Naive thymus-derived CD4-positive, alpha-beta T cell (primary cell): ENCODE measurements at regions of chr3 and their contacts with region 1.

Region 1: DNA sequence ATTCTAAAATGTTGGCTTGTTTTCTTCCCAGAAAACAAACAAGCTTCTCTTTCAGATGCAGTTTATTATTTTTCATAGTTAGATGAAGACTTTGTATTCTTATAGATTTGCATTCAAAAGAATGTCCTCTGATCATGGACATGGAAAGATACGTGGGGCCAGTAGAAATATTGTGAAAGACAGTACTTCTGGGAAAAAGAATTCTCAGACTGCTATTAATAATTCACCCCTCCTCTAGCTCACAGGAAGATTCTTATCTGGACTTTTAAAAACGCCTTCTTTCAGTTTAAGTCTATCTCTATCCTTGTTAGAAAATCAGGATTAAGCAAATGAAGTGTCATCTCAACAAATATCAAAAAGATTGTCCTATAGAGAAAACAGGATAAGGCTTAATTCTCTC is 514.1 kb upstream of the ADAMTS9 start:
- DNase-seq: no peak
- ATAC-seq: no peak
- H3K4me3 ChIP-seq: no peak overlapping the region
- H3K4me3 Mint-ChIP-seq: no peak overlapping the region
- H3K27ac ChIP-seq: no peak overlapping the region
- H3K27ac Mint-ChIP-seq: no peak overlapping the region
- H3K4me1 ChIP-seq: no peaks in the 10 kb centered on the region
- H3K4me1 Mint-ChIP-seq: no peaks in the 10 kb centered on the region
- H3K27me3 ChIP-seq: no peaks in the 10 kb centered on the region
- H3K27me3 Mint-ChIP-seq: peaks cover 0 to 4% (median 0%) of the 10 kb centered on the region in 5 donors

Region 2: DNA sequence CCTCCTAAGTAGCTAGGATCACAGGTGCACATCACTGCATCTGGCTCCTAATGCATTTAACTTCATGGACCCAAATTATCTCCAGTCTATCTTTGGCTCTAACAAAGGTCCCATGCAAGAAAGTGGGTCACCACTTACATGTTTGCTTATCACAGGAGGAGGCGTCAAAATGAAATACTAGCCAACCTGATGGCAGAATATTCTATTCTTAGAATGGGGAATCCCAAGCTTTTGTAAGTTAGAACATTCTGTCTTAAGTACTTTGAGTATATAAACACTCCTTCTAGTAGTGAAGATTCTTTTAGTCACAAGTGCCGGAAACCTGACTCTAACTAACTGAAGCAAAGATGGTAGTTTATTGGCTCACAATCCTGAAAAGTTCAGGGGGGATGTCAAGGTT is 442.1 kb before region 1 on chr3:
- CTCF ChIA-PET with region 1: no interaction called
- POLR2A ChIA-PET with region 1: no interaction called
- intact Hi-C with region 1: no loop called
- DNase-seq: no peak
- ATAC-seq: no peak
- H3K4me3 ChIP-seq: no peak overlapping the region
- H3K4me3 Mint-ChIP-seq: no peak overlapping the region
- H3K27ac ChIP-seq: no peak overlapping the region
- H3K27ac Mint-ChIP-seq: no peak overlapping the region
- H3K4me1 ChIP-seq: no peaks in the 10 kb centered on the region
- H3K4me1 Mint-ChIP-seq: no peaks in the 10 kb centered on the region
- H3K27me3 ChIP-seq: no peaks in the 10 kb centered on the region
- H3K27me3 Mint-ChIP-seq: peaks cover 0 to 2% (median 0%) of the 10 kb centered on the region in 5 donors

Region 3: DNA sequence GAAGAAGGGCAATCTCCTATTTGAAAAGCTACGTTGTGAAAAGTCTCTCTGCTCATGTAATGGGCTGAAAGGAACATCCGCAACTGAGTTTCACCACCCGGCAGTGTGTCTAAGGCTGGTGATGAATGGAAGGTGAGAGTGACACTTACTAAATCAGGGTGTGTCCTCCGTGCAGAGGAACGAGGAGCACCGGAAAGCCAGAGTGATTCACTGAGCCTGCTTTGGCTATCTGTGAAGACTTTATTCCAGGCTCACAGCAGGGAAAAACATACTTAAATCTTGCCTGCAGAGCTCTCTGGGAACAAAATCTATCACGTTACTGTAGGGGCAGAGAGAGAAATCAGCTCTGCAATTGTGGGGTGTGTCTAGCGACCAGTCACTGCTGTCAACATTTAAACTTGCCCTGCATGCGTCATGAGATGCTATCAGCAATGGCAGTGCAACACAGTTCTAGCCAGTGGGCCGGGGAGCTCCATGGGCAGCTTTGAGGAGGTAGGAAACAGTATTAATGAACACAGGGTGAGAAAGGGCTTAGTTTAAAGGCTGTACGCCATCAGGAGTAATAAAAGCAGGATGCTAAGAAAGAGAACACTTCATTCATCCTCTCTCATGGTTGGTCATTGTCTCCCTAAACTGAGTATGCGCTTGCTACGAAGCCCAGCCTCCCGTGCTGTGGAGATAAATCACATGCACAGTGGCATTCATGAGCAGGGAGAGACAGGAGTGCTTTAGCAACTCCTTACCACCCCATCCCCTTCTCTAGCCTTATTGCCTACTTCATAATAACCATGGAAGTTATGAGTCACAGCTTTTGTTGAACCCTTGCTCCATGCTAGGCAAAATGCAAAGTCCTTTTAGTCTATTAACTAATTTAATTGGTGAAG is 28.6 kb after region 1 on chr3:
- CTCF ChIA-PET with region 1: no interaction called
- POLR2A ChIA-PET with region 1: no interaction called
- intact Hi-C with region 1: loop called in 1 of 2 experiments (anchors 1 kb)
- DNase-seq: no peak
- ATAC-seq: no peak
- H3K4me3 ChIP-seq: no peak overlapping the region
- H3K4me3 Mint-ChIP-seq: no peak overlapping the region
- H3K27ac ChIP-seq: no peak overlapping the region
- H3K27ac Mint-ChIP-seq: peak overlapping the region in 1 of 9 donors; percentile 34
- H3K4me1 ChIP-seq: no peaks in the 10 kb centered on the region
- H3K4me1 Mint-ChIP-seq: no peaks in the 10 kb centered on the region
- H3K27me3 ChIP-seq: no peaks in the 10 kb centered on the region
- H3K27me3 Mint-ChIP-seq: no peaks in the 10 kb centered on the region